ENCODE measurements at regions of chr4 and their contacts with region 1.

Region 1: DNA sequence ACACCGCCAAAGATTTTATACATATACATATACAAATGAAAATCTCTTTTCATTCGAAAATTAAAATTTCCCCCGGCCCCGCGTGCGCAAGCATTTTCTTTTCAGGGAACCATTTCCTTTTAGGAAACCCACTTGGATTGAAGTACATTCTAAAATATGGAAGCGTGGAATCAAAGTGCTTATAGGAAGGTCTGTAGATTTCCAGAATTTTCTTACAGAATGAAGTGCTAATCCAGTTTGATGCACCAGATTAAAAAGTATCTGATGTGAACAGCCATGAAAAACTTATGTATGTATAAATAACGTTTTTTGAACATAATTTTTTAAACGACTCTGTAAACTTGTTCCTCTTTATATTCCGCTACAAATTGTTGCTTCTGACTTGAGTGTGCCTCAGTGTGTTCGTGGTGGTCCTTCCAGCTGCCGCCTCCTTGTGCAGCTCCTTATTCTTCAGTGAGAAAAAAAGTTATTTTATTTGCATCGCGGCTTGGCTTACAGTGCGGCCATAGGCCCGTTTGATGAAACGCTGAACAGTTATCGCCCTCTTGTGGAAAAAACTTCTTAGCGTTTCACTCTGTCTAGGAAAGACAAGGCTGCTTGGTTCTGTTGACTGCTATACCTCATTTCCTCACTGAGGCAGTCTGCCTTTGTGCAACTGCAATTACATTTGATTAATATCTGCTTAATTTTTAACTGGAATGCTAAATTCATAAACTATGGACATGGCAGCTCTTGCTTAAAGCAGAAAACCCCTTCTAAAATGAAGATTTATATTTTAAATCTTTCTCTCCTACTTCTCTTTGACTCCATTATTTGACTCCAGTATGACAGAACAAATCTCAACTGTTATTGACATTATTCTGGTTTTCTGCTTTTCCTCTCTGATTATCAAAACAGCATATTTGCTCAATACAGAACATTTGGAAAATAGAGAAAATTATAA is 4.7 kb upstream of the NKX6-1 start:
- DNase-seq: peak in 1 of 2 experiments; percentile 64
- H3K4me3 ChIP-seq: no peak overlapping the region
- H3K4me3 Mint-ChIP-seq: no peak overlapping the region
- H3K27ac Mint-ChIP-seq: no peak overlapping the region
- H3K4me1 ChIP-seq: no peaks in the 10 kb centered on the region
- H3K4me1 Mint-ChIP-seq: peaks cover 6% of the 10 kb centered on the region
- H3K27me3 ChIP-seq: no peaks in the 10 kb centered on the region
- H3K27me3 Mint-ChIP-seq: peaks cover 17% of the 10 kb centered on the region
- CTCF ChIP-seq: peak; percentile 68 to 70

Region 2: DNA sequence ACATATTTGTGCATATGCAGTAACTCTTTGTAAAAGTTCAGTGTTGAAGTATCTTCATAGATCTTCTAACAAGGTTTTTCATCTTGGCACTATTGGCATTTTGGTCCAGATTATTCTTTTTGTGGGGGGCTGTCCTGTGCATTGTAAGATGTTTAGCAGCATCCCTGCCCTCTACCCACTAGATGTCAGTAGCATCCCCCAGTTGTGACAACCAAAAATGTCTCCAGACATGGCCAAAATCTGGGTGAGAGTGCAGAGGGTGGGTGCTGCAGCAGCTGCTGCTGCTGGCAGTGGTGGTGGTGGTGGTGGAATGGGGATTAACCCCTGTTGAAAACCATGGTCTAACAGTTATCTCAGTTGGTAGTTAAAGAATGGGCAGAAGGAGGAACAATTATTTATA is 597.8 kb before region 1 on chr4:
- CTCF ChIA-PET with region 1: no interaction called
- POLR2A ChIA-PET with region 1: no interaction called
- intact Hi-C with region 1: loop called (anchors 1 kb)
- DNase-seq: peak; percentile 31 to 38
- H3K4me3 ChIP-seq: no peak overlapping the region
- H3K4me3 Mint-ChIP-seq: no peak overlapping the region
- H3K27ac Mint-ChIP-seq: no peak overlapping the region
- H3K4me1 ChIP-seq: no peaks in the 10 kb centered on the region
- H3K4me1 Mint-ChIP-seq: no peaks in the 10 kb centered on the region
- H3K27me3 ChIP-seq: no peaks in the 10 kb centered on the region
- H3K27me3 Mint-ChIP-seq: peaks cover 4% of the 10 kb centered on the region
- CTCF ChIP-seq: peak; percentile 48 to 62

Region 3: DNA sequence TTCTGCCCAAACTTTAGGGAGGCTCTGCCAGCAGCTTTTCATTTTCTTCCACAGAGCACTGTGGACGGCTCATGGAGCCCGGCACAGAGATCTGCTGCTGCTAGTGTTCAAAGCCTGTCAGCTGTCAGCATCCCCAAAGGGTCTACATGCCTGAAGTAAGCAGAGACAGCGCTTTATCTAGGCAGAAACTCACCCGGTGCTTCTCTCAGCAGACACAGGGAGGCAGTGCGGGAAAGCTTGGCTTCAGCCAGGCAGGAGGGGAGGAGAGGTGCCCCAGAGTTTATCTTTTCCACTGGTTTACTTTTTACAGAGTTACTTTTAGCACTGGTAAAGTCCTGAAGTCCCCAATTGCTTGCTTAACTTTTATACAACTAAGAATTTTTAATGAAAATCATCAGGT is 344.0 kb before region 1 on chr4:
- CTCF ChIA-PET with region 1: no interaction called
- POLR2A ChIA-PET with region 1: no interaction called
- intact Hi-C with region 1: loop called (anchors 2 kb)
- DNase-seq: peak; percentile 37 to 39
- H3K4me3 ChIP-seq: no peak overlapping the region
- H3K4me3 Mint-ChIP-seq: no peak overlapping the region
- H3K27ac Mint-ChIP-seq: no peak overlapping the region
- H3K4me1 ChIP-seq: peaks cover 7% of the 10 kb centered on the region; the same call in 1 of the 2 replicates
- H3K4me1 Mint-ChIP-seq: peaks cover 9% of the 10 kb centered on the region
- H3K27me3 ChIP-seq: no peaks in the 10 kb centered on the region
- H3K27me3 Mint-ChIP-seq: no peaks in the 10 kb centered on the region
- CTCF ChIP-seq: peak in 1 of 2 experiments; percentile 50

Region 4: GRCh38 chr4:84470204-84470785 is 33.5 kb before region 1 on chr4:
- CTCF ChIA-PET with region 1: no interaction called
- POLR2A ChIA-PET with region 1: no interaction called
- intact Hi-C with region 1: loop called (anchors 1 kb)
- DNase-seq: peak in 1 of 2 experiments; percentile 34
- H3K4me3 ChIP-seq: no peak overlapping the region
- H3K4me3 Mint-ChIP-seq: no peak overlapping the region
- H3K27ac Mint-ChIP-seq: no peak overlapping the region
- H3K4me1 ChIP-seq: no peaks in the 10 kb centered on the region
- H3K4me1 Mint-ChIP-seq: no peaks in the 10 kb centered on the region
- H3K27me3 ChIP-seq: no peaks in the 10 kb centered on the region
- H3K27me3 Mint-ChIP-seq: peaks cover 7% of the 10 kb centered on the region
- CTCF ChIP-seq: peak in 1 of 2 experiments; percentile 22

Region 5: DNA sequence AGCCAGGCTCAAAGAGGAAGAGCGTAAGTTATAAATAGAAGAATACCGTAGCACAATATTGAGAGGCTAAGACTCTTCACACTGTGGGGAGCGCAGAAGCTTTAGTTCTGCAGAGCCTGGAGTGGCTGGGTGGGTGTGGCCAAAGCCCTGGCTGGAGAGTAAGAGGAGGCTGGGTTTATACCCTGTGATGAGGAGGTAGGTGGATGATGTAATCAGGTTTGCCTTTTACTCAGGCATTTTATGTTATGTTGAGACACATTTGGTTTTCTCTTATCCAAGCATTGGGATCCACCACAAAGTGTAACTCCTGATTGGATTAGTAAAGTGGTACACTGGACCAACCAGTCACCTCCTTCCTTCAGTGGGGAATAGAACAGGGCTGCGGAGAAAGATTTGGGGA is 93.1 kb after region 1 on chr4:
- CTCF ChIA-PET with region 1: no interaction called
- POLR2A ChIA-PET with region 1: no interaction called
- intact Hi-C with region 1: no loop called
- DNase-seq: peak; percentile 53 to 58
- H3K4me3 ChIP-seq: no peak overlapping the region
- H3K4me3 Mint-ChIP-seq: no peak overlapping the region
- H3K27ac Mint-ChIP-seq: peak overlapping the region; percentile 92
- H3K4me1 ChIP-seq: peaks cover 41% of the 10 kb centered on the region
- H3K4me1 Mint-ChIP-seq: peaks cover 13% of the 10 kb centered on the region
- H3K27me3 ChIP-seq: no peaks in the 10 kb centered on the region
- H3K27me3 Mint-ChIP-seq: no peaks in the 10 kb centered on the region
- CTCF ChIP-seq: no peak

Measured in Caco-2 (cell line).